ENCODE measurements at regions of chr20 and their contacts with region 1.

Region 1: GRCh38 chr20:53739799-53740785 is 146.5 kb upstream of the ZNF217 start:
- DNase-seq: no peak
- H3K4me3 ChIP-seq: peak overlapping the region in 2 of 8 donors; percentile 23 to 48
- H3K27ac ChIP-seq: peak overlapping the region; percentile 65 to 87 (median 80)
- H3K4me1 ChIP-seq: peaks cover 33 to 71% (median 60%) of the 10 kb centered on the region in 6 donors
- H3K27me3 ChIP-seq: no peaks in the 10 kb centered on the region
- CTCF ChIP-seq: no peak
- POLR2A ChIP-seq: no peak

Region 2: DNA sequence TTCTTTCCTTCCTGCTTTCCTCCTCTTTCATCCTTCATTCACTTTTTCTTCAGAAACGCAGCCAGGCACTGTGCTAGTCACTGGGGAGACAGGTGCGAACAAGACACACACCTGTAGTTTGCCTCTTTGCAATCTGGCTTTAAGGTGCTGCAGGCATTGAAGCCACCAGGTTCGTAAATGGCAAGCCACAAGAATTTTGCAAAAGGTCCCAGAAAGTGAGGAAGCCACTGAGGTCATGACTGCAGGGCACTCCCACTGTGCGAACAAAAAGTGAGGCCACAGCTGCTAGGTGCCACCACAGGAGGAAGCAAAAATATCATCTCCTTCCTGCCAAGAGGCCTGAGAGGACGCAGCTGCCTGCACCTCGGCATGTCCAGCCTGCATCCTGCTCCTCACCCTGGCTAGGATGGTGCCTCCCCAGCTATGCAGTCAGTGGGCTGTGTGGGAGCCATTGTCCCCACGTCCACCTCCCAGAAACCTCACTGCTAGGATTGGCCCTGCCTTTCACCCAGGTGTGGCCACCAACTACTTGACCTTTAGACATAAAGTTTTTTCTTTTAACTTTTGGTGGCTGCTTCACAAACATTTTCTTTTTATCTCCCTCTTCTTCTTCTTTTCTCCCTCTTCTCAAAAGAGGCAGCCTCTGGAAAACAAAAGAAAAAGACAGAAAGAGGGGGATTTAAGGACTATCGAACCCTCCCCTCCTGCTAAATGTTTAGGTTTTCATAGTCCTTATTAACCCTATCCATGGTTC is 99.5 kb after region 1 on chr20:
- intact Hi-C with region 1: loop called (anchors 10 kb)
- DNase-seq: peak; percentile 92
- H3K4me3 ChIP-seq: peak overlapping the region in 1 of 8 donors; percentile 38
- H3K27ac ChIP-seq: peak overlapping the region; percentile 57 to 88 (median 84)
- H3K4me1 ChIP-seq: peaks cover 21 to 94% (median 71%) of the 10 kb centered on the region in 6 donors
- H3K27me3 ChIP-seq: no peaks in the 10 kb centered on the region
- CTCF ChIP-seq: peak in 4 of 11 experiments; percentile 6 to 45 (median 39)
- POLR2A ChIP-seq: no peak